Spleen (tissue), 13 donors: ENCODE measurements at regions of chr3 and their contacts with region 1.

Region 1: DNA sequence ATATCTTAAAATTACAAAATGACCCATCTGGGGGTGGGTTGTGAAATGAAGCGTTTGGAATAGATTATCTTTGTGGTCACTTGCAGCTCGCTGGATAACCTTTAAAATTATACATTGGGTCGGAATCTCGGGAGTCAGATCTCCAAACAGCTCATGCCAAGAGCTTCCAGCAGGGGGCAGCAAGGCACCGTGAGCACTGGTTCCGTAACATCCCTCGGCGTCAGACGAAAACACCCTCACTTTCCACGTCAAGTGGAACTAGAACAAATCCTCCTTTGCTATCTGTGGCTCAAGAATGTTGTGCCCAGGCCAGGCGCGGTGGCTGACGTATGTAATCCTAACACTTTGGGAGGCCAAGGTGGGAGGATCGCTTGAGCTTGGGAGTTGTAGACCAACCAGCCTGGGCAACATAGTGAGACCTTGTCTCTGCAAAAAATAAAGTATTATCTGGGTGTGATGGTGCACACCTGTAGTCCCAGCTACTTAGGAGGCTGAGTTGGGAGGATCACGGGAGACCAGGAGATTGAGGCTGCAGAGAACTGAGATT is 31.1 kb downstream of the UMPS start:
- DNase-seq: peak; percentile 89
- H3K4me3 ChIP-seq: peak overlapping the region in 1 of 8 donors; percentile 39
- H3K27ac ChIP-seq: peak overlapping the region in 3 of 8 donors; percentile 3 to 48 (median 12)
- H3K4me1 ChIP-seq: peaks cover 6 to 19% (median 12%) of the 10 kb centered on the region in 6 donors
- H3K27me3 ChIP-seq: no peaks in the 10 kb centered on the region
- CTCF ChIP-seq: peak; percentile 84 to 94 (median 91)
- POLR2A ChIP-seq: no peak

Region 2: DNA sequence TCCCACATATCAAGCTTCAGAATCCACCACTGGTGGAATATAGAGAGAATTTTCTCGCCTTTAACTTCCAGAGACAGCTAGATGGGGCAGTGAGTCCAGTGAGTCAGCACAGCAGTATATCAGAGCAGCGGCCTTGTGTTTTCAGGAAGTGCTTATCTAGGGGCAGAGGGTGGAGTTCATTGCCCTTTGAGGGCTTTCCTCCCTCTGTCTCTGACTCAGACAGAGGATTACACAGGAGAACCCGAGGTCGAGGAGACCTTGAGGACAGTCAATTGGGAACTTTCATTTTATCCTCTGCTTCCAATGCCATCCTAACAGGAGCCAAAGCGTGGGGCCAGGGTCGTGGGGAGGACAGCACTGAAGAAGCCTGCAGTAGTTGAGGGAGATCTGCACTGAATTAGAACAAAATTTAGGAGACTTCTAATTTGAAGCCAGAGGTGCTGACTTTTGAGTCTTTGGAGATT is 140.7 kb before region 1 on chr3:
- intact Hi-C with region 1: no loop called
- DNase-seq: no peak
- H3K4me3 ChIP-seq: peak overlapping the region in 1 of 8 donors; percentile 29
- H3K27ac ChIP-seq: peak overlapping the region in 7 of 8 donors; percentile 32 to 81 (median 75)
- H3K4me1 ChIP-seq: peaks cover 13 to 34% (median 26%) of the 10 kb centered on the region in 6 donors
- H3K27me3 ChIP-seq: no peaks in the 10 kb centered on the region
- CTCF ChIP-seq: peak in 3 of 11 experiments; percentile 22 to 30 (median 27)
- POLR2A ChIP-seq: no peak

Region 3: DNA sequence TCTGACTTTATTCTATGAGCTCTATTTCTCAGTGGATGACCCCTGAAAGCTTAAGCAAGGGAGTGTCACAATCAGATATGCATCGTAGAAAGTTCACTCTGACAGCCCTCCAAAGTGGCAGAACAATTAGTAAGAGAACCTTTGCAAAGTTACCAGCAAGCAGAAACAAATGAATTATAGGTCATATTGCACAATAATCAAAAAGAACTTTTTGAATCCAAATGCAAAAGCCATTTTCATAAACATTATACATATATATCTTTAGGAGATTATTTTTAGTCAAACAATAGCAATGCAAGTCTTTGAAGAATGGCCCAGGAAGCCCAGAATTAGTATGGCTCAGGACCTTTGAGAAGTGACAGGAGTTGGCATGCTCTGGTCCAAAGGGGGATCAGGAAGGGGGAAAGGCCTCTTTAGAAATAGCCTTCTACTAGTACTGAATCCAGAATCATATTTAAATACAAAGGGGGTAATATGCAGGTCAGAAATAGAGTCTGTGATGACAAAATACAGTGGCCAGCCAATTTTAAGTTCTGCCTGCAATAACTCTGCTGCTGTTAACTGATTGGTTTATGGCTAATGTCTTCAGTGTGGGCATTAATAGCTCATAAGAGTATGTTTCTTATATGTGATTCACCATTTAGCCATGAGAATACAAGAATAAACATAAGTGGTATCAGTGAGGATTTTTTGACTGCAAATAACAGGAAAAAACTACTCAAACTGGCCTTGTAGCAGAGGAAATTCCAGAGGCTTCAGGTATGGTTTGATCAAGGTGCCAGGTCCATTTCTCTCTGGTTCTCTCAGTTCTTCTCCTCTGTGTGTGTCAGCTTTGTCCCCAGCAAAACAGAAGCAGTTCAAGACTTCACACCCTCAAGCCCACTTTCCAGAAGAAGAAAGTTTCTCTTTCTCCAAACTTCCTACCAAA is 142.8 kb after region 1 on chr3:
- intact Hi-C with region 1: loop called (anchors 5 kb)
- DNase-seq: no peak
- H3K4me3 ChIP-seq: no peak overlapping the region
- H3K27ac ChIP-seq: no peak overlapping the region
- H3K4me1 ChIP-seq: peaks cover 0 to 24% (median 16%) of the 10 kb centered on the region in 6 donors
- H3K27me3 ChIP-seq: no peaks in the 10 kb centered on the region
- CTCF ChIP-seq: no peak
- POLR2A ChIP-seq: no peak